ENCODE measurements at regions of chr10 and their contacts with region 1.

Region 1: GRCh38 chr10:95374597-95375209 is 83.9 kb upstream of the PDLIM1 start:
- DNase-seq: peak; percentile 65 to 97 (median 86)

Region 2: GRCh38 chr10:95445837-95446486 is 71.3 kb after region 1 on chr10:
- intact Hi-C with region 1: loop called (anchors 2 kb)
- DNase-seq: peak in 2 of 10 donors; percentile 31 to 43

Region 3: DNA sequence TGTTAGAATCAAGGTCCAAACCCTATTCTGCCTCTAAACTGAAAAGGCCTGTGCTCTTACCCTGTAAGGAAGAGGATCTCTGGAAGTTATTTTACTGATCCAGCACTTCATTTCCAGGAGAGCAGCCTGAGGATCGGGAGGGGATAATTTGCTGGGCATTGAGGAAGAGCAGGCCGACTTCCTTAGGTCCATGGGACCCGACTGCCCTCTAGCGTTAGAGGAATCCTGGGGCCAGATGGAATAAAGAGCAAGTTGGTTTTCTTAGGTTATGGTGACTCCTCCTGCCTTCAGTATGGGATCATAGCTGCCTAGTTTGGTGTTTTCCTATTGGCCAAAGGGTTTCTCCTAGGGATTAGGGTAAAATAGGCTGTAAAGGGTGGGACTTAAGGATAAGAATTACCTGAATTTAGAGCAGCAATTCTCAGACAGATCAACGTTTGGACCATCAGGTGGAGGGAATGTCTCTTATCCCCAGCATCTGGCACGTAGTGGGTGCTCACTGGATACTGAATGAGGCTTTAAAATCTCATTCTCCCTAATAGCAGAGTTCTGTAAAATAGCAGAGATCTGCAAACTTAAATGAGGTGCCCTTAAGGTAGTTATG is 226.5 kb after region 1 on chr10:
- intact Hi-C with region 1: loop called (anchors 1 kb)
- DNase-seq: peak; percentile 45 to 95 (median 76)

Measured in posterior cingulate gyrus (tissue), 11 donors.